ENCODE measurements at regions of chr17 and their contacts with region 1.

Region 1: DNA sequence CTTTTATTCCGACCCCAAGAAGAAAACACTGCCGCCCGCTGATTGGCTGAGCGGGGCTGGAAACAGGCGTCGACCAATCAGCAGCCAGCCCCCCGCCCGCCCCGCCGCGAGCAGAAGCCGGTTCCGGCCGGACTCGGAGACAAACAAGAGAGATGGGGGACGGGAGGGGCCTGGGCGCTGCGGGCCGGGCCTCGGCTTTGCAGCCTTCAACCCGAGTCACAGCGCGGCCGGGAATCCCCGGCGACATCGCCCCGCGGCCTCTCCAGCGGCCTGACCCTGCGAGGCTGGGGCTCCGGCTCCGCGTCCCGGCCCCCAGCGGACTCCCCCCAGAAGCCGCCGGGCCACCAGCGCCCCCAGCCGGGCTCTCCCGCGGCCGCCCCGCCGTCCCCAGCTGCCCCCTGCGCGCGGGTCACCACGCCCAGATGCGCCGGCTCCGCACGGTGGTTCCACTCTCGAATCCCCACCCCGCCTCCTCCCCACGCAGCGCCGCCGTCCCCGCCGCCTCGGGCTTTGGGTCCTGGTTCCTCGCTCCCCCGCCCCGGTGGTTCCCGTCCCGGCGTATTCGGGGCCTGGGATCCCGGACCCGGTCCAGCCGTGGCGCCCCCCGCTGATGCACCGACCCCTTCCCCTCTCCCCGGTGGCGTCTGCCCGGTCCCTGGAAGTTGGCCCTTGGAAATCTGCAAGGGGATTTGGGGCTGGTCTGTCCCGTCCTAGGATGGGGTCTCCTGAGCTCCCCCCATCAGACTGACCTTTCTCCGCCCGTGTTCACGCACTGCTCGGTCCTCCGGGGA is 417 bp upstream of the SLC43A2 start:
- DNase-seq: peak; percentile 94 to 99
- H3K4me3 ChIP-seq: peak overlapping the region; percentile 91
- H3K4me1 ChIP-seq: peaks cover 29% of the 10 kb centered on the region
- H3K27me3 ChIP-seq: no peaks in the 10 kb centered on the region

Region 2: DNA sequence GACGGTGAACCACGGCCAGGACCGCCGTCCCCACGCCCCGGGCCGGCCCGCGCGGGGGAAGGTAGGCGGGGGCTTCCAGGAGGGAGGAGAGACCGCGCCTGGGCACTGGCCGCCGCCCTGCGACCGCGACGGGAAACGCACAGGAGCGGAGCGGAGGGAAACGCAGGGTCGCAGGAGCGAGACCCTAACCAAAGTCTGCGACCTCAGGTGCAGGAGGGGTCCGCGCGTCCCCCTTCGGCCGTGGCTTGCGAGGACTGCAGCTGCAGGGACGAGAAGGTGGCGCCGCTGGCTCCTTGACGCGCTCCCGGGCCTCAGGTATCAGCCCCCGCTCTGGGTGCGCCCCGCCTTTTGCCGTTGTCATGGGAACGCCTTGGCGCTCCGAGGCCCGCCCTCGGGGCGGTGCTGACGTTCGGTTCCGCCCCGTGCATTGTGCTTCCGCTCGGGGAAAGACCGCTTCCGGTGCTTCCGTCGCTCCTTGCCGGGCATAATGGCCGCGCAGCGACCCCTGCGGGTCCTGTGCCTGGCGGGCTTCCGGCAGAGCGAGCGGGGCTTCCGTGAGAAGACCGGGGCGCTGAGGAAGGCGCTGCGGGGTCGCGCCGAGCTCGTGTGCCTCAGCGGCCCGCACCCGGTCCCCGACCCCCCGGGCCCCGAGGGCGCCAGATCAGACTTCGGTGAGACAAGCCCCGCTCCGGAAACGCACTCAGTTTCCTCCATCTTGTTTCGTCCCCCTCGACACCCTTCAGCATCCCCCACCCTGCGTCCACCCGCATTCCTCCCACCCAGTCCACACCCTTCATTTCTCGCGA is 412.7 kb after region 1 on chr17 and contains the start of gene OVCA2:
- in situ Hi-C with region 1: loop called (anchors 25 kb)
- DNase-seq: peak; percentile 92 to 98
- H3K4me3 ChIP-seq: peak within 1 kb of the TSS; percentile 83
- H3K4me1 ChIP-seq: peaks cover 5% of the 10 kb centered on the region; the same call in 1 of the 2 replicates
- H3K27me3 ChIP-seq: no peaks in the 10 kb centered on the region